CD8-positive, alpha-beta T cell (primary cell): ENCODE measurements at regions of chr4 and their contacts with region 1.

Region 1: DNA sequence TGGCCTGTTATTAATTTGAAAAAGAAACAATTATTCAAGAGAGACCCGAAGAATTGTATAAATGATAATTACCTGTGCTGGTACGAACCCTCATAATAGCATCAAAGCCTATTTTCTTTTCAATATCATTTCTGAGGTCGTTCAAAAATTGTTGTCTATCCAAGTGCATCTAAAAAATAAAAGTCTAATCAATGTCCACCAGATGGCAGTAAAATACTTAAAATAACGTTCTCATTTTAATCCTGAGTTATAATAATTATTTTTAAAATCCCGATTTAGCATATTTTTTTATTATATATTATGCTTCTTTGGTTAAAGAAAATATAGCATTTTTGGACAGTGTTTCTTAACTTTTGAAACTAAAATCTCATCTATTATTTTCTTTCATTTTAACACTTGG is 55.7 kb downstream of the METTL14 start:
- DNase-seq: peak in 1 of 9 experiments; percentile 11
- ATAC-seq: no peak
- H3K4me3 ChIP-seq: no peak overlapping the region
- H3K4me3 Mint-ChIP-seq: no peak overlapping the region
- H3K27ac ChIP-seq: no peak overlapping the region
- H3K27ac Mint-ChIP-seq: no peak overlapping the region
- H3K4me1 ChIP-seq: no peaks in the 10 kb centered on the region
- H3K4me1 Mint-ChIP-seq: no peaks in the 10 kb centered on the region
- H3K27me3 ChIP-seq: no peaks in the 10 kb centered on the region
- H3K27me3 Mint-ChIP-seq: no peaks in the 10 kb centered on the region
- CTCF ChIP-seq: peak; percentile 70

Region 2: GRCh38 chr4:118338981-118339765 is 401.7 kb before region 1 on chr4:
- CTCF ChIA-PET with region 1: no interaction called
- POLR2A ChIA-PET with region 1: no interaction called
- intact Hi-C with region 1: no loop called
- DNase-seq: no peak
- ATAC-seq: no peak
- H3K4me3 ChIP-seq: no peak overlapping the region
- H3K4me3 Mint-ChIP-seq: no peak overlapping the region
- H3K27ac ChIP-seq: no peak overlapping the region
- H3K27ac Mint-ChIP-seq: no peak overlapping the region
- H3K4me1 ChIP-seq: no peaks in the 10 kb centered on the region
- H3K4me1 Mint-ChIP-seq: no peaks in the 10 kb centered on the region
- H3K27me3 ChIP-seq: no peaks in the 10 kb centered on the region
- H3K27me3 Mint-ChIP-seq: peaks cover 7% of the 10 kb centered on the region
- CTCF ChIP-seq: no peak

Region 3: GRCh38 chr4:118888666-118889311 is 147.9 kb after region 1 on chr4 and contains the start of gene SYNPO2:
- CTCF ChIA-PET with region 1: interaction called, 5 read pairs
- POLR2A ChIA-PET with region 1: no interaction called
- intact Hi-C with region 1: loop called (anchors 1 kb)
- DNase-seq: peak in 6 of 9 experiments; percentile 3 to 54 (median 22)
- ATAC-seq: peak; percentile 51
- H3K4me3 ChIP-seq: peak within 1 kb of the TSS; percentile 35 to 43
- H3K4me3 Mint-ChIP-seq: peak within 1 kb of the TSS; percentile 74
- H3K27ac ChIP-seq: no peak within 1 kb of the TSS
- H3K27ac Mint-ChIP-seq: no peak within 1 kb of the TSS
- H3K4me1 ChIP-seq: peaks cover 12% of the 10 kb centered on the region
- H3K4me1 Mint-ChIP-seq: peaks cover 16% of the 10 kb centered on the region
- H3K27me3 ChIP-seq: peaks cover 8 to 12% of the 10 kb centered on the region in 2 experiments
- H3K27me3 Mint-ChIP-seq: peaks cover 28% of the 10 kb centered on the region
- CTCF ChIP-seq: no peak
- total RNA-seq, gene SYNPO2: 0.24 to 0.25 TPM

Region 4: DNA sequence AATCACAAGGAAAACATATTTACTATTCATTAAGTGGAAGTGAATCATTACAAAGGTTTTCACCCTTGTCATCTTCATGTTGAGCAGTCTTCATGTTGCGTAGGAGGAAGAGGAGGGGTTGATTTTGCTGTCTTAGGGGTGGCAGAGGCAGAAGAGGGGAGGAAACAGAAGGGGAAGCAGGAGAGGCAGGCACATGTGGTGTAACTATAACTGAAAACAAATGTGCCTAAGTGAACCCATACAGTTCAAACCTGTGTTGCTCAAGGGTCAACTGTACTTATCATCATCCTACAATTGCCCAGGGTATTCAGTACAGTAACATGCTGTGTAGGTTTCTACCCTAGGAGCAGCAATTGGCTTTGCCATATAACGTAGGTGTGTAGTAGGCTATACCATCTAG is 194.9 kb after region 1 on chr4:
- CTCF ChIA-PET with region 1: no interaction called
- POLR2A ChIA-PET with region 1: no interaction called
- intact Hi-C with region 1: no loop called
- DNase-seq: no peak
- ATAC-seq: no peak
- H3K4me3 ChIP-seq: no peak overlapping the region
- H3K4me3 Mint-ChIP-seq: no peak overlapping the region
- H3K27ac ChIP-seq: no peak overlapping the region
- H3K27ac Mint-ChIP-seq: no peak overlapping the region
- H3K4me1 ChIP-seq: no peaks in the 10 kb centered on the region
- H3K4me1 Mint-ChIP-seq: no peaks in the 10 kb centered on the region
- H3K27me3 ChIP-seq: no peaks in the 10 kb centered on the region
- H3K27me3 Mint-ChIP-seq: peaks cover 4% of the 10 kb centered on the region
- CTCF ChIP-seq: no peak